Caco-2 (cell line): ENCODE measurements at regions of chr19 and their contacts with region 1.

Region 1: DNA sequence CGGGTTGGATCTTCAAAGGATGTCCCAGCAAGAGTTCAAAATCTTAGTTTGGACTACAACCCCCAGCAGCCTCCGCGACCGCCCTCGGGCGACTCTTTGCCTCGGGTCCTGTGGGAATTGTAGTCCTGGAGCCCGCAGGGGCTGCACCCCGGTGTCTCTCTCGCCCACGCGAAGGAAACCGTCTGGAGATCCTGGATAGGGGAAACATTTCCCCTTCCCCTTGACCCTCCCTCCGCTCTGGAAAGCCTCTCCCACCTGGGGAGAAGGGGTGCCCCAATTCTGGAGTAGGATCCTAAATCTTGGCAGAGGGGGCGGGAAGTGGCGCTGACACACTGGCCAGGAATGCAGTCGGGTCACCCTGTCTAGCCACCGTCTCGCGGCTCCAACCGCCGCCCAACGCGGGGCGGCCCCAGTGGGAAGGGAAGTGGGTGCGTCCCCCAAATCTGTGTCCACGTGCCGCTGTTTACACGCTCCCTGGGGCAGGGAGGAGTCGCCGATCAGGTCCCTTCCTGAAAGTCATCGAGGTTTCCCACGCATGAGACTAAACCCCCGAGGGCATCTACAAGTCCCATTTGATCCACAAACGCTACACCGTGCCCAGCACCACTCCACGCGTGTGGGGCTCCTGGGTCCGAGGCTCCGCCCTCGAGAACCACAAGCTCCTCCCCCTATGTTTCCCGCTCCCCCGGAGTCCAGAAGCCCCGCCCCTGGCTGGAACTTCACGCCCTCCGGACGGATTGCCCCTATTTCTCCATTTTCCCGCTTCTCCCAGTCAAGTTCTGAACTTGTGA is 761 bp upstream of the PPP1R13L start:
- DNase-seq: peak; percentile 95 to 96
- H3K4me3 ChIP-seq: peak overlapping the region; percentile 81
- H3K4me3 Mint-ChIP-seq: peak overlapping the region; percentile 93
- H3K27ac Mint-ChIP-seq: peak overlapping the region; percentile 96
- H3K4me1 ChIP-seq: peaks cover 13% of the 10 kb centered on the region
- H3K4me1 Mint-ChIP-seq: peaks cover 17% of the 10 kb centered on the region
- H3K27me3 ChIP-seq: no peaks in the 10 kb centered on the region
- H3K27me3 Mint-ChIP-seq: no peaks in the 10 kb centered on the region
- CTCF ChIP-seq: no peak

Region 2: DNA sequence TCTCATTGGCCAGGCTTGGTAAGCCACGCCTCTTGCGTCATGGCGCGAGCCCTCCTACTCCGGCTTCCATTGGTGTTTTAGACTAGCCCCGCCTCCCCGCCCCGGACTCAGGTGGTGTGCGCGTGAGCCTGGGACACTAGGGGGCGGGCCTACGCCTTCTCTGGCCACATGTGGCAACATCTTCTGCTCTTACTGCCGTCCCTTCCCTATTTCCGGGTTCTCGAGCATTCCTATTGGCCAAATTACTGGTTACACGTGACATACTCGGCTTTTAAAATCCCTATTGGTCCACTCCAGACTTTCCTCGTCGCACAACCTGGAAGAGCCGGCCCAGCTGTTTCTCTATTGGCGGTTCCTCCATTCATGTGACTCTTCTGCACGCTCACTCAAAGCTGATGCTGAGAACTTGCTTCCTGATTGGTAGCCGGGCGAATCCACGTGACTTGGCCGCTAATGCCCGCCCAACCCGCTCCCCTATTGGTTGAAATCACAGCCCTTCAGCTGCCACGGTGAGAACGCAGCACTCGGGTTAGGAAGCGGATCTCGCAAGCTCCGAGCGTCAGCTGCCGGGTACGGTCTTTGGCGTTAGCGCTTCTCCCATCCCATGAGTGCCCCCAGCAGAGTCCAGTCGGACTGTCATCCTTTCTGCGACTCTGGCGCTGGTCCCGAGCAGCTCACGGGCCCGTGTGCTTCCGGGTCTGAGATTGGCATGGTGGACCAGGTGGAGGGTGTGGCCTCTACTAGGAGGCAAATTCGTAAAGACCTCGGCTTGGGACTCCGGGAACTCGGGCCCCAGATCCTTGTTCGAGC is 227.2 kb before region 1 on chr19 and contains the start of gene BLOC1S3:
- CTCF ChIA-PET with region 1: no interaction called
- POLR2A ChIA-PET with region 1: no interaction called
- intact Hi-C with region 1: loop called (anchors 5 kb)
- DNase-seq: peak; percentile 100
- H3K4me3 ChIP-seq: peak within 1 kb of the TSS; percentile 77
- H3K4me3 Mint-ChIP-seq: peak within 1 kb of the TSS; percentile 85
- H3K27ac Mint-ChIP-seq: peak within 1 kb of the TSS; percentile 88
- H3K4me1 ChIP-seq: no peaks in the 10 kb centered on the region
- H3K4me1 Mint-ChIP-seq: peaks cover 11% of the 10 kb centered on the region
- H3K27me3 ChIP-seq: no peaks in the 10 kb centered on the region
- H3K27me3 Mint-ChIP-seq: no peaks in the 10 kb centered on the region
- CTCF ChIP-seq: peak; percentile 45 to 56
- total RNA-seq, gene BLOC1S3: 20.1 and 20.4 TPM in 2 replicates

Region 3: DNA sequence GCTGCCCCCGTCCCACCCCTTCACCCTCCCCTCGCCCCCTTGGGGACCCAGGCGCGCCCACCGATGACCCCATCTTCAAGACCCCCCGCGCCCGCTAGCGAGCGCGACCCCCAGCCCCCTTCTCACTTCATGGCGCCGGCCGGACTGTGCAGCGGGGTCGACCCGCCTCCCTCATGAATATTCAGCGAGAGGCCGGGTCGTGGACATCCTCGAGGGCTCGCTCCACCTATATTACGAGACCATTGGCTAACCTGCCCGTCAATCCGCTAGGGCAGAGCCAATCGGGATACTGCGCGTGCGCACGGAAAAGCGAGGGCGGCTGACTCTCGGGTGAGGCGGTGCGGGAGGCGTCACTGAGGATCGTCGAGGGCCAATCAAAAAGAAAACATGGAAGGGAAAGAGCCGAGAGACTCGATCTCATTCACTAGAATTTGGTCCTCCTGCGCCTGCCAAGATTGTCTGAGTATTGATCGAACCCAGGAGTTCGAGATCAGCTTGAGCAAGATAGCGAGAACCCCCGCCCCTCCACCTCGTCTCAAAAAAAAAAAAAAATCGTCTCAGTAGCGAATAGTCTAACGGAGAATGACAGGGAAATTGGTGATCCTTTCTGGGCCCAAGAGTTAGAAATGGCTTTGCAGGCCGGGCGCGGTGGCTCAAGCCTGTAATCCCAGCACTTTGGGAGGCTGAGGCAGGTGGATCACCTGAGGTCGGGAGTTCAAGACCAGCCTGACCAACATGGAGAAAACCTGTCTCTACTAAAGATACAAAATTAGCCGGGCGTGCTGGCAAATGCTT is 35.0 kb before region 1 on chr19 and contains the start of gene ERCC2:
- CTCF ChIA-PET with region 1: interaction called, 3 read pairs
- POLR2A ChIA-PET with region 1: no interaction called
- intact Hi-C with region 1: loop called (anchors 2 kb)
- DNase-seq: peak; percentile 100
- H3K4me3 ChIP-seq: peak within 1 kb of the TSS; percentile 87
- H3K4me3 Mint-ChIP-seq: peak within 1 kb of the TSS; percentile 78
- H3K27ac Mint-ChIP-seq: peak within 1 kb of the TSS; percentile 93
- H3K4me1 ChIP-seq: peaks cover 1% of the 10 kb centered on the region
- H3K4me1 Mint-ChIP-seq: peaks cover 7% of the 10 kb centered on the region
- H3K27me3 ChIP-seq: no peaks in the 10 kb centered on the region
- H3K27me3 Mint-ChIP-seq: no peaks in the 10 kb centered on the region
- CTCF ChIP-seq: no peak
- total RNA-seq, gene ERCC2: 86.8 and 89.5 TPM in 2 replicates

Region 4: GRCh38 chr19:45391340-45391739 is 14.3 kb before region 1 on chr19:
- CTCF ChIA-PET with region 1: interaction called, 12 read pairs
- POLR2A ChIA-PET with region 1: interaction called, 4 read pairs
- intact Hi-C with region 1: loop called (anchors 2 kb)
- DNase-seq: peak in 1 of 2 experiments; percentile 48
- H3K4me3 ChIP-seq: no peak overlapping the region
- H3K4me3 Mint-ChIP-seq: no peak overlapping the region
- H3K27ac Mint-ChIP-seq: peak overlapping the region; percentile 19
- H3K4me1 ChIP-seq: no peaks in the 10 kb centered on the region
- H3K4me1 Mint-ChIP-seq: no peaks in the 10 kb centered on the region
- H3K27me3 ChIP-seq: no peaks in the 10 kb centered on the region
- H3K27me3 Mint-ChIP-seq: no peaks in the 10 kb centered on the region
- CTCF ChIP-seq: no peak

Region 5: GRCh38 chr19:45423589-45424190 is 18.1 kb after region 1 on chr19 and contains the start of gene ERCC1:
- CTCF ChIA-PET with region 1: no interaction called
- POLR2A ChIA-PET with region 1: interaction called, 4 read pairs
- intact Hi-C with region 1: loop called (anchors 1 kb)
- DNase-seq: peak; percentile 99 to 100
- H3K4me3 ChIP-seq: peak within 1 kb of the TSS; percentile 65
- H3K4me3 Mint-ChIP-seq: peak within 1 kb of the TSS; percentile 86
- H3K27ac Mint-ChIP-seq: peak within 1 kb of the TSS; percentile 89
- H3K4me1 ChIP-seq: peaks cover 15% of the 10 kb centered on the region
- H3K4me1 Mint-ChIP-seq: peaks cover 20% of the 10 kb centered on the region
- H3K27me3 ChIP-seq: no peaks in the 10 kb centered on the region
- H3K27me3 Mint-ChIP-seq: no peaks in the 10 kb centered on the region
- CTCF ChIP-seq: no peak
- total RNA-seq, gene ERCC1: 43.5 and 51.0 TPM in 2 replicates

Region 6: DNA sequence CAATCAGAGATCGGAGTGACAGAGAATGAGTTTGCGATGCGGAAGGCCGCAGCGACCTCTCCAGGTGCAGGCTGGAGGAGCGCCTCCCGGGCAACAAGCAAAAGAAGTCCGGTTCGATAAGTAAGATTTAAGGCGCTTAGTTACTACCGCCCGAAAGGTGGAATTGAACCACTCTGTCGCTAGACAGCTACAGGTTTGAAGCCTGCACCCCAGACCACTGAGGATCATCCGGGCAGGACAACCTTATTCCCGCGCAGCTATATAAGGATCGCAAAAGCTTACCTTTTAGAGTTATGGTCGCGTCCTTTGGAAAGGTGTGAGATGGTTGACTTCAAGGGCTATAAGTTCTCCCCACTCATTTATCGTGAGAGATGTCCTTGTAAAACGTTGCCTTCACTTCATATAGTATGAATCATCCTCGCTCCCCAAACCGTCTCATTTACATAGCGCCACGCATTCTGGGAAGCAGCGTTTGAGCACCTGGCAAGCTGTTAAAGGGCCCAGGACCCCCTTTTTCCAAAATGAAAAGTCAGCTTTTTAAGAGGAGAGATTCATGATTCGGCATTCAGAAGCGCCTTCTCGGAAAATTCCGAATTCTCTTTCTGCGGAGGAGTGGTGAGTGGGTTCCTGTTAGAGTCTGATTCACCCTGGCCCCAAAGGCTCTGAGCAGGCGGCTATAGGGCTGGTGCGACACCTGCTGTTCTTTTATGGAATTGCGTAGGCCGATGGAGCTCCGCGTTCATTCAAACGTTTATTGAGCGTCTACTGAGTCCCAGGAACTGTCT is 73.0 kb after region 1 on chr19:
- CTCF ChIA-PET with region 1: interaction called, 12 read pairs
- POLR2A ChIA-PET with region 1: no interaction called
- intact Hi-C with region 1: no loop called
- DNase-seq: peak; percentile 92 to 94
- H3K4me3 ChIP-seq: peak overlapping the region; percentile 53
- H3K4me3 Mint-ChIP-seq: peak overlapping the region; percentile 53
- H3K27ac Mint-ChIP-seq: peak overlapping the region; percentile 99
- H3K4me1 ChIP-seq: 0 out of 2 replicates have a peak, but pooled peaks cover 4% of the 10 kb centered on the region
- H3K4me1 Mint-ChIP-seq: peaks cover 7% of the 10 kb centered on the region
- H3K27me3 ChIP-seq: no peaks in the 10 kb centered on the region
- H3K27me3 Mint-ChIP-seq: peaks cover 2% of the 10 kb centered on the region
- CTCF ChIP-seq: peak; percentile 94 to 96

Region 7: GRCh38 chr19:45485305-45486077 is 79.9 kb after region 1 on chr19:
- CTCF ChIA-PET with region 1: interaction called, 12 read pairs
- POLR2A ChIA-PET with region 1: no interaction called
- intact Hi-C with region 1: loop called (anchors 1 kb)
- DNase-seq: peak; percentile 98
- H3K4me3 ChIP-seq: peak overlapping the region; percentile 66
- H3K4me3 Mint-ChIP-seq: peak overlapping the region; percentile 88
- H3K27ac Mint-ChIP-seq: peak overlapping the region; percentile 74
- H3K4me1 ChIP-seq: no peaks in the 10 kb centered on the region
- H3K4me1 Mint-ChIP-seq: peaks cover 6% of the 10 kb centered on the region
- H3K27me3 ChIP-seq: no peaks in the 10 kb centered on the region
- H3K27me3 Mint-ChIP-seq: no peaks in the 10 kb centered on the region
- CTCF ChIP-seq: peak; percentile 91 to 92

Region 8: DNA sequence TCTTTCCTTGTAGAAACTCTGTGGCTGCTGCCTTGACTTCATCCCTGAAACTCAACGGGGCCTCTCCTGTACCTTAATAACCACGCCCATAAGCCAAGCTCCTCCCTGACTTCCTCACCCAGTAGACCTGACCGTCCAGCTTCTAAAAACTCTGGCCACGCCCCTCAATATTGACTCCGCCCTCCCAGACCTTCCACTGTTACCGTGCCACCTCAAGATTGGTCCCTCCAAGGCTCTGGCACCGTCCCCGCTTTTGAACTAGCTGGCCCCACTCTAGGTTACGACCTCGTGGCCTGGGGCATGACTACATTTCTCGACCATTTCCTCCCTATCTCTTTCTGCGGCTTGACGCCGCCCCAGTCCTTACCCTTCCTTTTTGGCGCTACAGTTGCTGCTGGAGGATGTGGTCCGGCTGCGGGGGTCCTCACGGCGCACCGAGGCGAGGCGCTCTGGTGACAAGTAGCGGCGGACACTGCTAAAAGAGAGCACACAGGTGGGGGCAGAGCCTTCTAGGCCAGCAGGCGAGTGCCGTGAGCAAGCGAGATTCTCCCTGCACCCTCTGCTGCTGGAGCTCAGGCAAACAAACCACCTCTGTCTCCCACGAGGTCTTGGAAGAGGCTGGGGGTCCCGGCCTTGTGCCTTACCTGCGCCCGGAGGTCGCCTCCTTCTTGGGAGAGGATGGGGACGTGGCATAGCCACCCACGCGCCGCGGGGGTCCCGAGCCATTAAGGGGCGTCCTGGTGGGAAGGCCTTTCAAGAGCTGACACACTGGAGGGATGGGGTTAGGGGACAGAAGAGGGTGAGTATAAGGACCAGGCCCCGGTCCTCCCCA is 235.9 kb after region 1 on chr19:
- CTCF ChIA-PET with region 1: no interaction called
- POLR2A ChIA-PET with region 1: no interaction called
- intact Hi-C with region 1: no loop called
- DNase-seq: peak; percentile 93 to 97
- H3K4me3 ChIP-seq: peak overlapping the region; percentile 39
- H3K4me3 Mint-ChIP-seq: peak overlapping the region; percentile 75
- H3K27ac Mint-ChIP-seq: peak overlapping the region; percentile 84
- H3K4me1 ChIP-seq: peaks cover 25% of the 10 kb centered on the region
- H3K4me1 Mint-ChIP-seq: peaks cover 25% of the 10 kb centered on the region
- H3K27me3 ChIP-seq: no peaks in the 10 kb centered on the region
- H3K27me3 Mint-ChIP-seq: no peaks in the 10 kb centered on the region
- CTCF ChIP-seq: no peak